GM23248 (cell line): ENCODE measurements at regions of chr3 and their contacts with region 1.

Region 1: GRCh38 chr3:189144617-189145016 is 27.2 kb upstream of the TPRG1 start:
- DNase-seq: peak; percentile 16
- H3K4me3 ChIP-seq: no peak overlapping the region
- H3K27ac ChIP-seq: no peak overlapping the region
- H3K4me1 ChIP-seq: peaks cover 9% of the 10 kb centered on the region; the same call in 1 of the 2 replicates
- H3K27me3 ChIP-seq: no peaks in the 10 kb centered on the region

Region 2: GRCh38 chr3:188617988-188618701 is 526.5 kb before region 1 on chr3:
- in situ Hi-C with region 1: no loop called
- DNase-seq: no peak
- H3K4me3 ChIP-seq: no peak overlapping the region
- H3K27ac ChIP-seq: no peak overlapping the region
- H3K4me1 ChIP-seq: no peaks in the 10 kb centered on the region
- H3K27me3 ChIP-seq: no peaks in the 10 kb centered on the region

Region 3: GRCh38 chr3:188954590-188955208 is 189.9 kb before region 1 on chr3:
- in situ Hi-C with region 1: loop called (anchors 5 kb)
- DNase-seq: peak; percentile 89
- H3K4me3 ChIP-seq: no peak overlapping the region
- H3K27ac ChIP-seq: 0 out of 2 replicates have a peak overlapping the region, but pooled peaks have one; percentile 13
- H3K4me1 ChIP-seq: peaks cover 24% of the 10 kb centered on the region
- H3K27me3 ChIP-seq: no peaks in the 10 kb centered on the region

Region 4: DNA sequence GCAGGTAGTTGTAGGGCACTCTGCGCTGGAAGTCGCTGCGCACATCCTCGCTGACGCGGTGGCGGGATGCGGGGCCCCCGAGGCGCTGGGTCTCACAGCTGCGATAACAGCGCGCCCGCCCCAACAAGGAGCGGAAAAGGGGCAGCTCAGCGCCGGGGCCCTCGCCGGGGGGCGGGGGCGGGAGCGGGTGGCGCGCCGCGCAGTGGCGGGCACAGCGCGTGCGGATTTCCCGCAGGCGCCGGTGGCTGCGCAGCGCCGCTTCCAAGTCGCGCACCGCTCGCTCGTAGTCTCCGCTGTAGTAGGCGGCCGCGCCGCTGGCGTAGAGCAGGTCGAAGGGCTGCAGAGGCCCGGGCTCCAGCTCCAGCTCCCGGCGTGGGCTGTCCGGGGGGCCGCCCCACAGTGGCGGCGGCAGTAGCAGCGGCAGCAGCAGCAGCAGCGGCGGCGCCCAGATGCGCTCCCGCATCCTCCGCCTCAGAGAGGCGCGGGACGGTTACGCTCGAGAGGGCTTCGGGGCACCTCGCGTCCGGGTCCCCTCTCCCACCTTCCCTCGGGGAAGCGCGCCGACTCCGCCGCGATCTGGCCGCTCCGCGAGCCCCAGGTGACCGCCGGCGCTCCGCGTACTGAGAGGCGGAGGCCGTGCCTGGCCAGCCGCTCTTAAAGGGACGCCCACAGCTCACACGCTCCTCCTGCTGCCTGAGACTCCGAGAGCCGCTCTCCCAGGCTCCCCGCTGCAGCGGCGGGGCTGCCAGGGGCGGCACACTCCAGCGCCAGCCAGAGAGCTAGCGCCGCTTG is 975.8 kb after region 1 on chr3 and contains the start of gene P3H2:
- in situ Hi-C with region 1: no loop called
- DNase-seq: peak; percentile 97
- H3K4me3 ChIP-seq: peak within 1 kb of the TSS; percentile 82
- H3K27ac ChIP-seq: 0 out of 2 replicates have a peak within 1 kb of the TSS, but pooled peaks have one; percentile 22
- H3K4me1 ChIP-seq: 0 out of 2 replicates have a peak, but pooled peaks cover 3% of the 10 kb centered on the region
- H3K27me3 ChIP-seq: no peaks in the 10 kb centered on the region
- total RNA-seq, gene P3H2: 14.9 and 41.5 TPM in 2 replicates